MCF 10A (cell line): ENCODE measurements at regions of chr11 and their contacts with region 1.

Region 1: GRCh38 chr11:131899950-131900580 is 529.6 kb downstream of the NTM start:
- DNase-seq: no peak
- H3K4me3 Mint-ChIP-seq: no peak overlapping the region
- H3K27ac Mint-ChIP-seq: no peak overlapping the region
- H3K4me1 Mint-ChIP-seq: no peaks in the 10 kb centered on the region
- H3K27me3 Mint-ChIP-seq: no peaks in the 10 kb centered on the region
- CTCF ChIP-seq: no peak

Region 2: GRCh38 chr11:131867457-131868257 is 32.4 kb before region 1 on chr11:
- CTCF ChIA-PET with region 1: no interaction called
- POLR2A ChIA-PET with region 1: no interaction called
- intact Hi-C with region 1: loop called (anchors 2 kb)
- DNase-seq: peak; percentile 2
- H3K4me3 Mint-ChIP-seq: no peak overlapping the region
- H3K27ac Mint-ChIP-seq: no peak overlapping the region
- H3K4me1 Mint-ChIP-seq: no peaks in the 10 kb centered on the region
- H3K27me3 Mint-ChIP-seq: no peaks in the 10 kb centered on the region
- CTCF ChIP-seq: no peak

Region 3: GRCh38 chr11:131928992-131929391 is 28.9 kb after region 1 on chr11:
- CTCF ChIA-PET with region 1: no interaction called
- POLR2A ChIA-PET with region 1: no interaction called
- intact Hi-C with region 1: no loop called
- DNase-seq: no peak
- H3K4me3 Mint-ChIP-seq: no peak overlapping the region
- H3K27ac Mint-ChIP-seq: no peak overlapping the region
- H3K4me1 Mint-ChIP-seq: no peaks in the 10 kb centered on the region
- H3K27me3 Mint-ChIP-seq: no peaks in the 10 kb centered on the region
- CTCF ChIP-seq: no peak